PC-3 (cell line): ENCODE measurements at regions of chr2 and their contacts with region 1.

Region 1: GRCh38 chr2:43637030-43637803 is at the start of gene PLEKHH2:
- DNase-seq: peak; percentile 86
- ATAC-seq: peak; percentile 87
- H3K4me3 ChIP-seq: peak within 1 kb of the TSS; percentile 76
- H3K27ac ChIP-seq: no peak within 1 kb of the TSS
- H3K4me1 ChIP-seq: peaks cover 22% of the 10 kb centered on the region
- H3K27me3 ChIP-seq: no peaks in the 10 kb centered on the region
- CTCF ChIP-seq: no peak
- total RNA-seq, gene PLEKHH2: 1.9 and 2.7 TPM in 2 replicates

Region 2: DNA sequence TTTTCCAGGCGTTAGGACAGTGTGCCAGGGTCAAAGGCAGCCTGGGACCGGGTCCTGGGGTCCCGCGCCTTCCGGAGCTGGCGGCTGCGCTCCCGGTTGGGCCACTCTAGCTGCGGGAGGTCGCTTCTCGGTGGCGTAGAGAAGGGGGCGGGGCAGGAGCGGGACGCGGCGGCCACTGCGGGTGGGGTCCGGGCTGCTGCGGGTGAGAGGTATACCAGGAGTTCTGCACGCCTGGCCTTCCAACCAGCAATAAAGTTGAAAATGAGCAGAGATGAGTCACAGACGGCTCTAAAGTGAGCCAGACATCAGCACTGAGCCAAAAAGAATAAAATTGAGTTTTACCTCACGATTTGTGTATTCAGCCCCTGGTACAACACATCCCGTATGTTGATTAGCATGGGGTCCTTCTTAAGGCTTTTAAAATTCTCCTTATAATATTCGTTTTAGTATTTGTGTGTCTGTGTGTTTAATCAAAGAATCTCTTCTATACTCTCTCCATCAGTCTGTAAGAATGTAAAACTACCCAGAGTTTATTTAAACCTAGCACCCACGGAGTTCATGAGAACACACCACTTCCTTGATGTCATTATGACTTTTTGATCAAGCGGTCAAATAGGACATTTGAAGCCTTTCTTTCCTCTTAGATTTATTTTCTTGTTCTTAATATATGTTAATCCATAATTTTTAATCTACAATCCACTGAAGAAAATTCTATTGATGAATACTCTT is 39.3 kb after region 1 on chr2 and contains the start of gene C1GALT1C1L:
- CTCF ChIA-PET with region 1: no interaction called
- POLR2A ChIA-PET with region 1: no interaction called
- intact Hi-C with region 1: loop called (anchors 5 kb)
- DNase-seq: no peak
- ATAC-seq: no peak
- H3K4me3 ChIP-seq: no peak within 1 kb of the TSS
- H3K27ac ChIP-seq: no peak within 1 kb of the TSS
- H3K4me1 ChIP-seq: no peaks in the 10 kb centered on the region
- H3K27me3 ChIP-seq: no peaks in the 10 kb centered on the region
- CTCF ChIP-seq: no peak
- total RNA-seq, gene C1GALT1C1L: not detected in 2 replicates

Region 3: DNA sequence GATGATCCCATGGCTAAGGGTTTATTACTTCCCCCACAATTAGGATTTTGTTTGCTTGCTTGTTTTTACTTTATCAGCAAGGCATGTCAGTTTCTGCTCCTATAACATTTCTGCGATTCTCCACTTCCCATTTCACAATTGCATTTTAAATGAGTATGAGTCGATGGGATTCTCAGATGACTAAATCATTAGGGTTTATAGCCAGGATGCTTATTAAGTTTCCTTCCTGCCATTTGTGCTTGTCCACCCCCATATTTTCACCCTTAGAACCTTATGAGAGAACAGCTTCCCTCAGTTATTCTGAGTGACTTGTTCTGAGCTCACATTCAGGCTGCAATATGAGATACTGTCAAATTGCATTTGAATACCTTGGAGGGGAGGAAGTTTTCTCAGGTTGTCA is 76.9 kb after region 1 on chr2:
- CTCF ChIA-PET with region 1: no interaction called
- POLR2A ChIA-PET with region 1: no interaction called
- intact Hi-C with region 1: loop called (anchors 2 kb)
- DNase-seq: peak; percentile 51
- ATAC-seq: peak; percentile 90
- H3K4me3 ChIP-seq: no peak overlapping the region
- H3K27ac ChIP-seq: peak overlapping the region; percentile 58
- H3K4me1 ChIP-seq: peaks cover 26% of the 10 kb centered on the region
- H3K27me3 ChIP-seq: no peaks in the 10 kb centered on the region
- CTCF ChIP-seq: no peak

Region 4: GRCh38 chr2:43773876-43774613 is 136.8 kb after region 1 on chr2 and contains the start of gene DYNC2LI1:
- CTCF ChIA-PET with region 1: no interaction called
- POLR2A ChIA-PET with region 1: no interaction called
- intact Hi-C with region 1: loop called (anchors 5 kb)
- DNase-seq: peak; percentile 91
- ATAC-seq: peak; percentile 100
- H3K4me3 ChIP-seq: peak within 1 kb of the TSS; percentile 84
- H3K27ac ChIP-seq: peak within 1 kb of the TSS; percentile 76
- H3K4me1 ChIP-seq: no peaks in the 10 kb centered on the region
- H3K27me3 ChIP-seq: no peaks in the 10 kb centered on the region
- CTCF ChIP-seq: no peak
- total RNA-seq, gene DYNC2LI1: 10.8 and 17.7 TPM in 2 replicates